Prostate gland (tissue), 2 donors: ENCODE measurements at regions of chr21 and their contacts with region 1.

Region 1: GRCh38 chr21:40120940-40121575 is 253.8 kb downstream of the PCP4 start:
- DNase-seq: no peak
- H3K4me3 ChIP-seq: no peak overlapping the region
- H3K27ac ChIP-seq: no peak overlapping the region
- H3K4me1 ChIP-seq: no peaks in the 10 kb centered on the region
- H3K27me3 ChIP-seq: no peaks in the 10 kb centered on the region
- CTCF ChIP-seq: peak; percentile 84 to 97 (median 90)
- POLR2A ChIP-seq: no peak

Region 2: GRCh38 chr21:39788383-39788782 is 332.7 kb before region 1 on chr21:
- intact Hi-C with region 1: loop called (anchors 5 kb)
- DNase-seq: peak; percentile 89
- H3K4me3 ChIP-seq: peak overlapping the region; percentile 19 to 24
- H3K27ac ChIP-seq: peak overlapping the region in 1 of 2 donors; percentile 17
- H3K4me1 ChIP-seq: no peaks in the 10 kb centered on the region
- H3K27me3 ChIP-seq: no peaks in the 10 kb centered on the region
- CTCF ChIP-seq: peak; percentile 71 to 99 (median 90)
- POLR2A ChIP-seq: no peak

Region 3: DNA sequence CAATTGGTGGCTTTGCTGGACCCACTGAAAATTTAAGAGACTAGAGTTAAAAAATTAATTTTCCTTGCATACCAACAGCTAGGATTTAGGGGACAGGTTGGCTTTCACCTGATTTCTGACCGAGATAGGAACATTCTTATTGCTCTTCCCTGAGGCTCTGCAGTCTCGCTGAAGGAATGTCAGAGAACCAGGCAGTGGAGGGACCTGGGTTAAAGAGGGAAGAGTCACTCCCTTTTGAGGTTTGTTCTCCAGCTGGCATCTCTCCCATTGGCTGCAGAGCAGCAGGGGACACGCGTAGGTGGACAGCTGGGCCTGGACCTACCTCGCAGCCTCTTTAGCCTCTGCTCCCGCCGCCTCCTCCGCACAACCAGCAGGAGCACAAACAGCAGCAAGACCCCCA is 46.3 kb before region 1 on chr21:
- intact Hi-C with region 1: loop called (anchors 5 kb)
- DNase-seq: no peak
- H3K4me3 ChIP-seq: no peak overlapping the region
- H3K27ac ChIP-seq: peak overlapping the region in 1 of 2 donors; percentile 14
- H3K4me1 ChIP-seq: no peaks in the 10 kb centered on the region
- H3K27me3 ChIP-seq: no peaks in the 10 kb centered on the region
- CTCF ChIP-seq: no peak
- POLR2A ChIP-seq: no peak